Mammary epithelial cell (primary cell): ENCODE measurements at regions of chr10 and their contacts with region 1.

Region 1: GRCh38 chr10:19702215-19702614 is 114.0 kb upstream of the PLXDC2 start:
- DNase-seq: peak; percentile 56
- H3K4me3 ChIP-seq: no peak overlapping the region
- H3K27ac ChIP-seq: no peak overlapping the region
- H3K4me1 ChIP-seq: peaks cover 2% of the 10 kb centered on the region
- H3K27me3 ChIP-seq: no peaks in the 10 kb centered on the region
- CTCF ChIP-seq: no peak

Region 2: GRCh38 chr10:19654576-19654975 is 47.6 kb before region 1 on chr10:
- CTCF ChIA-PET with region 1: no interaction called
- dilution Hi-C with region 1: no loop called
- in situ Hi-C with region 1: no loop called
- intact Hi-C with region 1: loop called (anchors 10 kb)
- DNase-seq: peak; percentile 58
- H3K4me3 ChIP-seq: peak overlapping the region in 1 of 3 experiments; percentile 26
- H3K27ac ChIP-seq: peak overlapping the region; percentile 77
- H3K4me1 ChIP-seq: peaks cover 20% of the 10 kb centered on the region
- H3K27me3 ChIP-seq: no peaks in the 10 kb centered on the region
- CTCF ChIP-seq: no peak